Right ventricle myocardium inferior (tissue), 1 donor: ENCODE measurements at regions of chr3 and their contacts with region 1.

Region 1: DNA sequence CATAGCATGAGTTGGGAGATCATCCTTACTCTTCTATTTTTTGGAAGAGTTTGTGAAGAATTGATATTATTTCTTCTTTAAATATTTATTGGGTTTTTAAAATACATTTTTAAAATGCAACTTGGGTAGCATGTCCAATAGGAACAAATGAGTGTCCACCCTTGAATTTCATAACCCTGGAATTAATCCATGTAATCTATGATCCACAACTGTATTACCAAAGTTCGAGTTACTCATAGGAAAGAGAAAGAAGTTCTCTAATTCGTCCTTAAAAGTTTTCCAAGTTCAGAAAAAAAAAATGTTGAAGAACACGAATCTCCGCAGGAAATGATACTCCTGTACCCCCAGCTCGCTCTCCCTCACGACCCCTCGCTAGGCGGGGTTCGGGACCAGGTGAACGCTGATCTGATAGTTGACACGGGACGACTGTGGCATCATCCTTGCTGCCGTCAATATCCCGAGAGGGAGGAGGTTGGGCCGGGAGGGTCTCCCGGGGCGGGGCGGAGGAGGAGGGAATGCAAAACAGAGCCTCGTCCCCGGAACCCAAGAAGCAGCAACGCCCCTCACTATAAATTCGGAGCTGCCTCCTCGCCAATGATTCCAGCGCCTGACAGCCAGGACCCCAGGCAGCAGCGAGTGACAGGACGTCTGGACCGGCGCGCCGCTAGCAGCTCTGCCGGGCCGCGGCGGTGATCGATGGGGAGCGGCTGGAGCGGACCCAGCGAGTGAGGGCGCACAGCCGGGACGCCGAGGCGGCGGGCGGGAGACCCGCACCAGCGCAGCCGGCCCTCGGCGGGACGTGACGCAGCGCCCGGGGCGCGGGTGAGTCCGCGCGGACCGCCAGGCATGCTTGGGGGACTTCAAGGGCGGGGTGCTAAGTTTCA is at the start of gene AGTR1:
- DNase-seq: peak; percentile 86
- ATAC-seq: peak; percentile 89
- total RNA-seq, gene AGTR1: 2.2 TPM

Region 2: GRCh38 chr3:148528024-148528423 is 169.5 kb before region 1 on chr3:
- intact Hi-C with region 1: no loop called
- DNase-seq: no peak
- ATAC-seq: no peak

Region 3: GRCh38 chr3:148643389-148643840 is 54.1 kb before region 1 on chr3:
- intact Hi-C with region 1: loop called (anchors 10 kb)
- DNase-seq: no peak
- ATAC-seq: peak; percentile 65

Region 4: GRCh38 chr3:148790851-148791735 is 93.5 kb after region 1 on chr3:
- intact Hi-C with region 1: no loop called
- DNase-seq: no peak
- ATAC-seq: peak; percentile 86

Region 5: GRCh38 chr3:148847351-148847750 is 149.8 kb after region 1 on chr3:
- intact Hi-C with region 1: no loop called
- DNase-seq: no peak
- ATAC-seq: peak; percentile 70